ENCODE measurements at regions of chr2 and their contacts with region 1.

Region 1: GRCh38 chr2:20398956-20399567 is 47.8 kb upstream of the RHOB start:
- DNase-seq: no peak
- H3K4me3 ChIP-seq: no peak overlapping the region
- H3K27ac ChIP-seq: no peak overlapping the region
- H3K4me1 ChIP-seq: no peaks in the 10 kb centered on the region
- H3K27me3 ChIP-seq: peaks cover 21% of the 10 kb centered on the region in 2 experiments
- CTCF ChIP-seq: no peak
- POLR2A ChIP-seq: no peak

Region 2: DNA sequence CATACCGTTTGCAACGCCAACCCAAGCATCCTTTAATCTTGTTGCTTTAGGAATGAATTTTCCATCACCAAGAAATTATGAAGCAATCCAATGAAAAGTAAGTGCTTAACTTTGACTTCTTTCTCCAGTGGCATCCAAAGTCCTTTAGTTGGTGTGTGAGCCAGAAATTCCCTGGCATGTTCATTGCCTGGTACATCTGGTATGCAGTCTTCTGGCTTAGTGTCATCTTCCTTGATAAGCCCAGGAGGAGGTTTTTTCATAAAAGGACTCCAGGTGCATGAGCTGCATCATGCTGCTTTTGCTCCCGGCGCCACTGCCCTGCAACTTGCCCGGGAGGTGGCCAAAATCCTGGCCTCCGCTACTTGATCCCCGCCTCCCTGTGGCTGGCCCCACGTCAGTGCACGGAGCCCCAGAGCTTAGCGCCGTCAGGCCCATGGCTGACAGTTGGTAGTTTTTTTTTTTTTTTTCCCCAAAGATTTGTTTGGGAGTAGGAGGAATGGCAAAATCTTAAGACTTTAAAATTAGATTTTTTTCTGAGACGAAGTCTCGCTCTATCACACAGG is 107.1 kb before region 1 on chr2:
- CTCF ChIA-PET with region 1: no interaction called
- POLR2A ChIA-PET with region 1: no interaction called
- dilution Hi-C with region 1: no loop called
- intact Hi-C with region 1: no loop called
- DNase-seq: no peak
- H3K4me3 ChIP-seq: no peak overlapping the region
- H3K27ac ChIP-seq: no peak overlapping the region
- H3K4me1 ChIP-seq: peaks cover 14% of the 10 kb centered on the region
- H3K27me3 ChIP-seq: no peaks in the 10 kb centered on the region
- CTCF ChIP-seq: no peak
- POLR2A ChIP-seq: no peak

Region 3: GRCh38 chr2:20343128-20343527 is 55.9 kb before region 1 on chr2:
- CTCF ChIA-PET with region 1: no interaction called
- POLR2A ChIA-PET with region 1: no interaction called
- dilution Hi-C with region 1: no loop called
- intact Hi-C with region 1: no loop called
- DNase-seq: no peak
- H3K4me3 ChIP-seq: no peak overlapping the region
- H3K27ac ChIP-seq: no peak overlapping the region
- H3K4me1 ChIP-seq: peaks cover 19% of the 10 kb centered on the region
- H3K27me3 ChIP-seq: no peaks in the 10 kb centered on the region
- CTCF ChIP-seq: no peak
- POLR2A ChIP-seq: no peak

Region 4: DNA sequence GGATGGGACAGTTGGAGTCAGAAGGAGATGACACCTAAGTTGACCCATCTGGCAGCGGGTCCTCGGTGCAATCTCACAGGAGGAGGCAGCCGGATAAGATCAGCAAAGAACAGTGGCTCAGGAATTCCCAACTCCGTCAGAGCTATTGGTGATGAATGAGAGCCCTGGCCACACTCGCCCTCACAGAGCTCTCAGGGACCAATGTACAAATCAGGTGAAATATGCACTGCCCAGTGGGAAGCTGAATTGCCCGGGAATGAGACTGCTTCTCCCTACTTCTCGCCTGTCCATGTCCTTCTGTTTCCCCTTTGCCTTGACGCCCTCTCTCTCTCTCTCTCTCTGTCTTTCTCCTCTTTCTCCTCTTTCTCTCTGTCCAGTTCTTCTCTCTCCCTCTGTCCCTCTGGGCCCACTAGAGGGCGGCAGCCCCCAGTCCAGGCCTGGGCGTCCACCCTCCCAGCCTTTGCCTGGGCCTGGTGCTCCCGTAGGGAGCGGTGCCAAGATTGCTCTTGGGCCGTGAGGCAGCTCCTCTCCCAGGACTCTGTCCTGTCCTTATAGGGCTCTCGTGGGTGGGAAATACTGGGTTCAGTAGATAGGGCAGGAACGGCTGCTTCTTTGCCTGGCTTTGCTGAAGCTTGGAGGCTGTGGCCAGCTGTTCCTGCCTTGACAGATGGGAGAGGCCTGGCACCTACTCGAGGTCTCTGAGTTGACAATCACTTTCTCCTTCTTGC is 20.1 kb before region 1 on chr2:
- CTCF ChIA-PET with region 1: interaction called, 10 read pairs
- POLR2A ChIA-PET with region 1: no interaction called
- dilution Hi-C with region 1: no loop called
- intact Hi-C with region 1: no loop called
- DNase-seq: peak; percentile 78
- H3K4me3 ChIP-seq: no peak overlapping the region
- H3K27ac ChIP-seq: no peak overlapping the region
- H3K4me1 ChIP-seq: no peaks in the 10 kb centered on the region
- H3K27me3 ChIP-seq: peaks cover 6 to 9% of the 10 kb centered on the region in 2 experiments
- CTCF ChIP-seq: peak; percentile 87 to 89
- POLR2A ChIP-seq: no peak

Region 5: GRCh38 chr2:20424300-20425290 is 25.5 kb after region 1 on chr2:
- CTCF ChIA-PET with region 1: interaction called, 9 read pairs
- POLR2A ChIA-PET with region 1: no interaction called
- dilution Hi-C with region 1: no loop called
- intact Hi-C with region 1: loop called (anchors 2 kb)
- DNase-seq: peak; percentile 51
- H3K4me3 ChIP-seq: no peak overlapping the region
- H3K27ac ChIP-seq: no peak overlapping the region
- H3K4me1 ChIP-seq: peaks cover 12% of the 10 kb centered on the region
- H3K27me3 ChIP-seq: no peaks in the 10 kb centered on the region
- CTCF ChIP-seq: no peak
- POLR2A ChIP-seq: no peak

Region 6: GRCh38 chr2:20438334-20439192 is 39.5 kb after region 1 on chr2:
- CTCF ChIA-PET with region 1: interaction called, 15 read pairs
- POLR2A ChIA-PET with region 1: no interaction called
- dilution Hi-C with region 1: no loop called
- intact Hi-C with region 1: loop called (anchors 1 kb)
- DNase-seq: peak; percentile 66
- H3K4me3 ChIP-seq: peak overlapping the region in 1 of 3 experiments; percentile 30
- H3K27ac ChIP-seq: peak overlapping the region; percentile 54
- H3K4me1 ChIP-seq: peaks cover 17% of the 10 kb centered on the region
- H3K27me3 ChIP-seq: no peaks in the 10 kb centered on the region
- CTCF ChIP-seq: no peak
- POLR2A ChIP-seq: no peak

Region 7: DNA sequence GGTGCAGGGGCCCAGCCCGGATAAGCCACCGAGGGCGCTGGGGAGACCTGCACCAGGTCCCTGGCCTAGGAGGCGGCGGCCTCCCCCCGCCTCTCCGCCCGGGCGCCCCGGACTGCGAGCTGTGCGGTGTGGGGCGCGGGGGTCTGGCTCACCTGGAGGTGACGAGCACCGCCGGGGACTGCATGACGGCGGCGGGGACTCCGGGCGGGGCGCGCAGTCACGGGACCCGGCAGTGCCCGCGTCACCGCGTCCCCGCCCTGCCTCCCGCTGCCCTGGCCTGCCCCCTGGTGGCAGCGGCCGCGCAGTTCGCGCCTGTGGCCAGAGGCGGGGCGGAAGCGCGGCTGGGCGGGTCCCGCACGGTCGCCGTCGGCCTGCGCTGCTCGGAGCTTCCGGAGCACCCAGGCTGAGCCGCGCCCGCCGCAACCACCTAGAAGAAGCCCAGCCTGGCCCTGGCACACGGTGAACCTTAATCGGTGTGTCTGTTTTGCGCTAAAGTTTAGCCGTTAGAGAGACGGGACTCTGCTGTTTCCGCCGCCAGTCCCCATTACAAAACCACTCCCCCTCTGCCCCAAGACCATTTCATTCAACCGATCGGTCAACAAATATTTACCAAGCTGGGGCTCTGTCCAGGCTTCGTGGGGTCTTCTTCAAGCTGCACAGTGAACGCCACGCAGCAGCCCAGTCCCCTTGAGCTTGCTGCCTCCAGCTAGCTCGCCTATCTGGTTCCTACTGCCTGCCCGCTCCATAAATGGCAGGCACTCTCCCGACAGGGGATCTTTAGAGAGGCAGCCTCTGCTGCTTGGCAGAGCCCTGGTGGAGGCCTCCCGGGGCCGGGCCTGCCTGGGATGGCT is 252.0 kb after region 1 on chr2 and contains the start of gene HS1BP3:
- CTCF ChIA-PET with region 1: interaction called, 17 read pairs
- POLR2A ChIA-PET with region 1: no interaction called
- dilution Hi-C with region 1: no loop called
- intact Hi-C with region 1: no loop called
- DNase-seq: peak; percentile 77
- H3K4me3 ChIP-seq: peak within 1 kb of the TSS; percentile 50 to 95 (median 75)
- H3K27ac ChIP-seq: peak within 1 kb of the TSS; percentile 64
- H3K4me1 ChIP-seq: peaks cover 10% of the 10 kb centered on the region
- H3K27me3 ChIP-seq: peaks cover 9 to 10% of the 10 kb centered on the region in 2 experiments
- CTCF ChIP-seq: peak; percentile 73 to 96
- POLR2A ChIP-seq: peak; percentile 87
- total RNA-seq, gene HS1BP3: 27.8 and 33.1 TPM in 2 replicates

Measured in endothelial cell of umbilical vein (primary cell).